A549 (cell line): ENCODE measurements at regions of chr17 and their contacts with region 1.

Region 1: DNA sequence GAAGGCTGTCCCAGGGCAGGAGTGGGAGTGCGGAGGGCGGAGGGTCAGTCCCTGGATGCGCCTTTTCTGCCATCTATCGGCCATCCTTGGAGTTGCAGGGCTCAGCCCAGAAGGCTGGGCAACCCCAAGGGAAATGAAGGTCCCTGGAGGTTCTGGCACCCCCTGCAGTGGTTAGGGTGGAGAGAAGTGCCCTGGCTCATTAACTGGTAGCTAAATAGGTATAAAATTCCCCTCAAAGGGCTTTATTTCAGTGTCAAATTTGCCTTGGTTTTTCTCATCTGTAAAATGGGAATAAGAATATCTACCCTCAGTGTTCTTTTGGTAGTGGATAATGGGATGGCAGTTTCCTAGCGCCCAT is 22.4 kb downstream of the C17orf75 start:
- DNase-seq: peak; percentile 69 to 88
- ATAC-seq: peak; percentile 89 to 96
- H3K4me3 ChIP-seq: no peak overlapping the region
- H3K27ac ChIP-seq: no peak overlapping the region
- H3K4me1 ChIP-seq: no peaks in the 10 kb centered on the region
- CTCF ChIP-seq: peak; percentile 94
- EP300 ChIP-seq: no peak
- POLR2A ChIP-seq: no peak
- RAD21 ChIP-seq: peak; percentile 97 to 98

Region 2: GRCh38 chr17:32191306-32191705 is 128.2 kb before region 1 on chr17:
- CTCF ChIA-PET with region 1: no interaction called
- POLR2A ChIA-PET with region 1: no interaction called
- DNase-seq: no peak
- ATAC-seq: peak in 1 of 2 experiments; percentile 76; a peak in 3 of 6 replicates
- H3K4me3 ChIP-seq: no peak overlapping the region
- H3K27ac ChIP-seq: peak overlapping the region; percentile 51 to 52; a peak in 5 of 6 replicates
- H3K4me1 ChIP-seq: peaks cover 21% of the 10 kb centered on the region
- CTCF ChIP-seq: no peak
- EP300 ChIP-seq: no peak
- POLR2A ChIP-seq: no peak
- RAD21 ChIP-seq: no peak

Region 3: GRCh38 chr17:32206861-32207260 is 112.7 kb before region 1 on chr17:
- CTCF ChIA-PET with region 1: interaction called, 51 read pairs
- POLR2A ChIA-PET with region 1: no interaction called
- DNase-seq: no peak
- ATAC-seq: no peak
- H3K4me3 ChIP-seq: no peak overlapping the region
- H3K27ac ChIP-seq: no peak overlapping the region
- H3K4me1 ChIP-seq: peaks cover 11% of the 10 kb centered on the region
- CTCF ChIP-seq: no peak
- EP300 ChIP-seq: no peak
- POLR2A ChIP-seq: no peak
- RAD21 ChIP-seq: no peak

Region 4: GRCh38 chr17:32265192-32265923 is 54.2 kb before region 1 on chr17 and contains the start of gene RHBDL3:
- CTCF ChIA-PET with region 1: interaction called, 13 read pairs
- POLR2A ChIA-PET with region 1: no interaction called
- DNase-seq: peak in 1 of 2 experiments; percentile 55
- ATAC-seq: peak; percentile 42 to 47
- H3K4me3 ChIP-seq: peak within 1 kb of the TSS; percentile 89
- H3K27ac ChIP-seq: peak within 1 kb of the TSS; percentile 55 to 84
- H3K4me1 ChIP-seq: peaks cover 38% of the 10 kb centered on the region
- CTCF ChIP-seq: no peak
- EP300 ChIP-seq: no peak
- POLR2A ChIP-seq: no peak; the same call in 1 of the 2 replicates
- RAD21 ChIP-seq: no peak
- polyA plus RNA-seq, gene RHBDL3: 2.0 and 3.1 TPM in 2 replicates

Region 5: GRCh38 chr17:32277281-32277680 is 42.2 kb before region 1 on chr17:
- CTCF ChIA-PET with region 1: interaction called, 13 read pairs
- POLR2A ChIA-PET with region 1: no interaction called
- DNase-seq: no peak
- ATAC-seq: peak; percentile 14 to 31; a peak in 2 of 6 replicates
- H3K4me3 ChIP-seq: no peak overlapping the region
- H3K27ac ChIP-seq: no peak overlapping the region; a peak in 1 of 6 replicates
- H3K4me1 ChIP-seq: peaks cover 57% of the 10 kb centered on the region
- CTCF ChIP-seq: no peak
- EP300 ChIP-seq: no peak
- POLR2A ChIP-seq: no peak
- RAD21 ChIP-seq: no peak

Region 6: DNA sequence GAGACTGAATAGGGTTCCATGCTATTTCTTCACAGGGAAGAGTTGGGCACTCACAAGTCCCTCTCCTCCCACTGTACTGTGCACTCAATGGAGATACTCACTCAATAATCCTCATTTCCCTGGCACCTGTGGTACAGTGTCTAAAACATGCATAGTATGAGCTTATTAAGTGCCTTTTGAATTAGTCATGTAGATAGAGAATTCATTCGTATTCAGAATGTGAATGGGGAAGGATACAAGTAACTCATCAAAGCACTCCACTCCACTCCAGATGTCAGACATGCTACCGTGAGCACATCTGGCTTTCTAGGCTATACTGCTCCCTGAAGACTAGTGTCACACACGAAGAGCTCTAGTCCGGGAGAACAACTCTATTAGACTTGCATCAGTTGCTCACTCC is 16.2 kb after region 1 on chr17:
- CTCF ChIA-PET with region 1: interaction called, 40 read pairs
- POLR2A ChIA-PET with region 1: no interaction called
- DNase-seq: no peak
- ATAC-seq: peak; percentile 34 to 39; a peak in 3 of 6 replicates
- H3K4me3 ChIP-seq: no peak overlapping the region
- H3K27ac ChIP-seq: no peak overlapping the region
- H3K4me1 ChIP-seq: peaks cover 1% of the 10 kb centered on the region; the same call in 1 of the 3 replicates
- CTCF ChIP-seq: no peak
- EP300 ChIP-seq: no peak
- POLR2A ChIP-seq: no peak
- RAD21 ChIP-seq: no peak

Region 7: DNA sequence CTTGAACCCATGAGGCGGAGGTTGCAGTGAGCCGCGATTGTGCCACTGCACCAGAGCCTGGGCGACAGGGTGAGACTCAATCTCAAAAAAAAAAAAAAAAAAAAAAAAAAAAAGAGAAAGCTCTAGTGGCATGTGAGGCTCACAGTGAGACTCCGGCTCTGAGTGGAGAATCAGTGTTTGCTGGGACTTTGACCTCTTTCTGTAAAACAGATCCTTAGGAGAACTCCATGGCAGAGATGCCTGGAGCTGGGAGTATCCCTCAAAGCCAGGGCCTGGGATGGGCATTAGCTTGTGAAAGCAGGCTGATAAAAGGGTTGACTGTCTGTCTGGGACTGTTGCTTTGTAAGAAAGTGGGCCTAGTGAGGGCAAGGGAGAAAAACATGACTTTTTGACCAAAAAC is 76.8 kb after region 1 on chr17:
- CTCF ChIA-PET with region 1: no interaction called
- POLR2A ChIA-PET with region 1: no interaction called
- DNase-seq: no peak
- ATAC-seq: peak; percentile 39 to 60; a peak in 3 of 6 replicates
- H3K4me3 ChIP-seq: no peak overlapping the region
- H3K27ac ChIP-seq: no peak overlapping the region
- H3K4me1 ChIP-seq: 0 out of 3 replicates have a peak, but pooled peaks cover 4% of the 10 kb centered on the region
- CTCF ChIP-seq: no peak
- EP300 ChIP-seq: no peak
- POLR2A ChIP-seq: no peak
- RAD21 ChIP-seq: no peak